MCF 10A (cell line): ENCODE measurements at regions of chr1 and their contacts with region 1.

Region 1: GRCh38 chr1:78145105-78145580 is 99.4 kb downstream of the GIPC2 start:
- DNase-seq: peak; percentile 79
- H3K4me3 Mint-ChIP-seq: no peak overlapping the region
- H3K27ac Mint-ChIP-seq: no peak overlapping the region
- H3K4me1 Mint-ChIP-seq: peaks cover 16% of the 10 kb centered on the region
- H3K27me3 Mint-ChIP-seq: no peaks in the 10 kb centered on the region
- CTCF ChIP-seq: peak; percentile 85

Region 2: GRCh38 chr1:78132174-78132947 is 12.8 kb before region 1 on chr1:
- CTCF ChIA-PET with region 1: interaction called, 14 read pairs
- POLR2A ChIA-PET with region 1: interaction called, 7 read pairs
- intact Hi-C with region 1: loop called (anchors 2 kb)
- DNase-seq: no peak
- H3K4me3 Mint-ChIP-seq: no peak overlapping the region
- H3K27ac Mint-ChIP-seq: no peak overlapping the region
- H3K4me1 Mint-ChIP-seq: no peaks in the 10 kb centered on the region
- H3K27me3 Mint-ChIP-seq: no peaks in the 10 kb centered on the region
- CTCF ChIP-seq: no peak

Region 3: GRCh38 chr1:78177708-78178270 is 32.6 kb after region 1 on chr1:
- CTCF ChIA-PET with region 1: no interaction called
- POLR2A ChIA-PET with region 1: no interaction called
- intact Hi-C with region 1: no loop called
- DNase-seq: no peak
- H3K4me3 Mint-ChIP-seq: no peak overlapping the region
- H3K27ac Mint-ChIP-seq: no peak overlapping the region
- H3K4me1 Mint-ChIP-seq: peaks cover 6% of the 10 kb centered on the region
- H3K27me3 Mint-ChIP-seq: no peaks in the 10 kb centered on the region
- CTCF ChIP-seq: no peak

Region 4: GRCh38 chr1:78229344-78229743 is 84.2 kb after region 1 on chr1:
- CTCF ChIA-PET with region 1: interaction called, 22 read pairs
- POLR2A ChIA-PET with region 1: no interaction called
- intact Hi-C with region 1: no loop called
- DNase-seq: peak; percentile 94
- H3K4me3 Mint-ChIP-seq: peak overlapping the region; percentile 20
- H3K27ac Mint-ChIP-seq: peak overlapping the region; percentile 63
- H3K4me1 Mint-ChIP-seq: peaks cover 42% of the 10 kb centered on the region
- H3K27me3 Mint-ChIP-seq: no peaks in the 10 kb centered on the region
- CTCF ChIP-seq: no peak

Region 5: GRCh38 chr1:78303620-78304019 is 158.5 kb after region 1 on chr1:
- CTCF ChIA-PET with region 1: interaction called, 5 read pairs
- POLR2A ChIA-PET with region 1: no interaction called
- intact Hi-C with region 1: loop called (anchors 5 kb)
- DNase-seq: peak; percentile 98
- H3K4me3 Mint-ChIP-seq: peak overlapping the region; percentile 11
- H3K27ac Mint-ChIP-seq: peak overlapping the region; percentile 87
- H3K4me1 Mint-ChIP-seq: peaks cover 24% of the 10 kb centered on the region
- H3K27me3 Mint-ChIP-seq: no peaks in the 10 kb centered on the region
- CTCF ChIP-seq: no peak

Region 6: GRCh38 chr1:78491451-78492071 is 346.4 kb after region 1 on chr1:
- CTCF ChIA-PET with region 1: interaction called, 3 read pairs
- POLR2A ChIA-PET with region 1: no interaction called
- intact Hi-C with region 1: loop called (anchors 5 kb)
- DNase-seq: peak; percentile 55
- H3K4me3 Mint-ChIP-seq: peak overlapping the region; percentile 94
- H3K27ac Mint-ChIP-seq: no peak overlapping the region
- H3K4me1 Mint-ChIP-seq: peaks cover 27% of the 10 kb centered on the region
- H3K27me3 Mint-ChIP-seq: no peaks in the 10 kb centered on the region
- CTCF ChIP-seq: no peak

Region 7: GRCh38 chr1:78591971-78592370 is 446.8 kb after region 1 on chr1:
- CTCF ChIA-PET with region 1: interaction called, 12 read pairs
- POLR2A ChIA-PET with region 1: no interaction called
- intact Hi-C with region 1: no loop called
- DNase-seq: no peak
- H3K4me3 Mint-ChIP-seq: no peak overlapping the region
- H3K27ac Mint-ChIP-seq: no peak overlapping the region
- H3K4me1 Mint-ChIP-seq: peaks cover 6% of the 10 kb centered on the region
- H3K27me3 Mint-ChIP-seq: no peaks in the 10 kb centered on the region
- CTCF ChIP-seq: no peak

Region 8: GRCh38 chr1:78676347-78676982 is 531.3 kb after region 1 on chr1:
- CTCF ChIA-PET with region 1: interaction called, 9 read pairs
- POLR2A ChIA-PET with region 1: no interaction called
- intact Hi-C with region 1: loop called (anchors 1 kb)
- DNase-seq: peak; percentile 76
- H3K4me3 Mint-ChIP-seq: no peak overlapping the region
- H3K27ac Mint-ChIP-seq: no peak overlapping the region
- H3K4me1 Mint-ChIP-seq: no peaks in the 10 kb centered on the region
- H3K27me3 Mint-ChIP-seq: no peaks in the 10 kb centered on the region
- CTCF ChIP-seq: peak; percentile 71